Activated CD8-positive, alpha-beta T cell treated with anti-CD3 and anti-CD28 coated beads for 36 hours (primary cell): ENCODE measurements at regions of chr2 and their contacts with region 1.

Region 1: GRCh38 chr2:164717000-164717803 is 95.9 kb upstream of the GRB14 start:
- DNase-seq: no peak
- ATAC-seq: no peak
- H3K4me3 Mint-ChIP-seq: no peak overlapping the region
- H3K27ac Mint-ChIP-seq: no peak overlapping the region
- H3K4me1 Mint-ChIP-seq: no peaks in the 10 kb centered on the region
- H3K27me3 Mint-ChIP-seq: no peaks in the 10 kb centered on the region
- CTCF ChIP-seq: peak; percentile 67

Region 2: DNA sequence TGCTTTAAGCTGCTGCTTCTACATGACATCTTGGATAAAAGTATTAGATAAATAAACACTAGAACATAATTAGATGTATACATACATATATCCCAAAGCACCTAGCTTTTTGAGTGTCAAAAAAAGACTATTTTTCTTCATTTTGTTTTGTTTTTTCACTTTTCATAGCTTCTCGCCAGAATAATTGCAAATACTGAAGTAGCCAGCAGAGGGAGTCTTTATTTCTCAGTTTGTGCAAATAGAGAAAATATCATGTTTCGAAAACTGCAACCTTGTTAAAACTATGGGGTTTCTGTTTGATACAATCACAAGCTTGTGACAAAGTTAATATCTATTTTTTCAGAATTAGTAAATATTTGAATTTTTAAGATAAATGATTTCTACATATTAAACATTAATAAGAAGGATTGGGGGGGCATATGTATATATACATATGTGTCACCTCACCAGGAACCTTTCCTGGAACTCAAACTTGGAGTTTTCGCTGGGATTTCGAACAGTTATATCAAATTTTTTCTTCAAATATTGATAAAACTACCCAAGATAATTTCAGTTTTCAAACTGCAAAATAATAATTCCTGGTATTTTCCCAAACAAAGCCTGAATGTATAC is 156.9 kb before region 1 on chr2:
- CTCF ChIA-PET with region 1: interaction called, 5 read pairs
- POLR2A ChIA-PET with region 1: no interaction called
- intact Hi-C with region 1: loop called (anchors 2 kb)
- DNase-seq: no peak
- ATAC-seq: no peak
- H3K4me3 Mint-ChIP-seq: no peak overlapping the region
- H3K27ac Mint-ChIP-seq: no peak overlapping the region
- H3K4me1 Mint-ChIP-seq: no peaks in the 10 kb centered on the region
- H3K27me3 Mint-ChIP-seq: no peaks in the 10 kb centered on the region
- CTCF ChIP-seq: peak; percentile 45